GM13977 (cell line): ENCODE measurements at regions of chr22 and their contacts with region 1.

Region 1: GRCh38 chr22:22408731-22409696 is 99.5 kb downstream of the ZNF280B start:
- DNase-seq: peak; percentile 63
- CTCF ChIP-seq: peak; percentile 61

Region 2: DNA sequence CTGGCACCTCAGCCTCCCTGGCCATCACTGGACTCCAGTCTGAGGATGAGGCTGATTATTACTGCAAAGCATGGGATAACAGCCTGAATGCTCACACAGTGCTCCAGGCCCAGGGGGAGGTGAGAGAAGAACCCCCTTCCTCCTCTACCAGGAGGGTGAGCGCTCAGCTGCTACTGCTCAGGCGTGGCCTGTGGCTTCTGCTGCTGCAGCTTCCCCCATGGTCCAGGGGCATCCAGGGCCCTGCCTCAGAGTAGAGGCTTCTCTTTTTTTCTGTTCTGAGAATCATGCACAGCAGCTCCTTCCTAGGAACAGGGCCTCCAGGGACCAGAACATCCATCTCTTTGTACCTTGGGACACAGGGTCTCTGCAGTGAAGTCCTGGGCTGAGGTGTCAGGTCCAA is 81.3 kb before region 1 on chr22:
- in situ Hi-C with region 1: no loop called
- DNase-seq: no peak
- CTCF ChIP-seq: no peak

Region 3: GRCh38 chr22:22681221-22681739 is 272.3 kb after region 1 on chr22:
- in situ Hi-C with region 1: no loop called
- DNase-seq: no peak
- CTCF ChIP-seq: no peak

Region 4: DNA sequence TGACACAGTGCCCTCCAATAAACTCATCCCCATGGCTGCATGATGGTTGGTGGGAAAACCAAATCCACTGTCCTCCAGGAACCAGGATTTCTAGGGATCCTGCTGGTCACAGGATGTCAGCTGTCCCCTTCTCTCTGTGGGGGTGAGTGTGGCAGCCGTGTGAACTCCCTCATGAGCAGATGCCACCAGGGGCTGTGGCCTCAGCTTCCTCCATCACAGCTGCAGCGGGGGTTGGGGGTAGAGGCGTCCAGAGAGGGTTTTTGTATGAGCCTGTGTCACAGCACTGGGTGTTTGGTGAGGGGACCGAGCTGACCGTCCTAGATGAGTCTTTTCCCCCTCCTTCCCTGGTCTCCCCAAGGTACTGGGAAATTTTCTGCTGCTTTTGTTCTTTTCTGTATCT is 505.0 kb after region 1 on chr22:
- in situ Hi-C with region 1: loop called (anchors 5 kb)
- DNase-seq: no peak
- CTCF ChIP-seq: no peak

Region 5: GRCh38 chr22:23128269-23129108 is 719.5 kb after region 1 on chr22:
- in situ Hi-C with region 1: loop called (anchors 10 kb)
- DNase-seq: peak; percentile 84
- CTCF ChIP-seq: peak; percentile 79